ENCODE measurements at regions of chr1 and their contacts with region 1.

Region 1: GRCh38 chr1:208245185-208245705 is 1.1 kb upstream of the PLXNA2 start:
- DNase-seq: peak; percentile 87 to 94 (median 88)
- ATAC-seq: peak; percentile 87
- H3K4me3 ChIP-seq: peak overlapping the region; percentile 90 to 95
- H3K27ac ChIP-seq: peak overlapping the region; percentile 70 to 89
- H3K4me1 ChIP-seq: peaks cover 8 to 38% of the 10 kb centered on the region in 2 donors
- H3K27me3 ChIP-seq: peaks cover 0 to 33% of the 10 kb centered on the region in 2 donors
- CTCF ChIP-seq: peak; percentile 64 to 72

Region 2: DNA sequence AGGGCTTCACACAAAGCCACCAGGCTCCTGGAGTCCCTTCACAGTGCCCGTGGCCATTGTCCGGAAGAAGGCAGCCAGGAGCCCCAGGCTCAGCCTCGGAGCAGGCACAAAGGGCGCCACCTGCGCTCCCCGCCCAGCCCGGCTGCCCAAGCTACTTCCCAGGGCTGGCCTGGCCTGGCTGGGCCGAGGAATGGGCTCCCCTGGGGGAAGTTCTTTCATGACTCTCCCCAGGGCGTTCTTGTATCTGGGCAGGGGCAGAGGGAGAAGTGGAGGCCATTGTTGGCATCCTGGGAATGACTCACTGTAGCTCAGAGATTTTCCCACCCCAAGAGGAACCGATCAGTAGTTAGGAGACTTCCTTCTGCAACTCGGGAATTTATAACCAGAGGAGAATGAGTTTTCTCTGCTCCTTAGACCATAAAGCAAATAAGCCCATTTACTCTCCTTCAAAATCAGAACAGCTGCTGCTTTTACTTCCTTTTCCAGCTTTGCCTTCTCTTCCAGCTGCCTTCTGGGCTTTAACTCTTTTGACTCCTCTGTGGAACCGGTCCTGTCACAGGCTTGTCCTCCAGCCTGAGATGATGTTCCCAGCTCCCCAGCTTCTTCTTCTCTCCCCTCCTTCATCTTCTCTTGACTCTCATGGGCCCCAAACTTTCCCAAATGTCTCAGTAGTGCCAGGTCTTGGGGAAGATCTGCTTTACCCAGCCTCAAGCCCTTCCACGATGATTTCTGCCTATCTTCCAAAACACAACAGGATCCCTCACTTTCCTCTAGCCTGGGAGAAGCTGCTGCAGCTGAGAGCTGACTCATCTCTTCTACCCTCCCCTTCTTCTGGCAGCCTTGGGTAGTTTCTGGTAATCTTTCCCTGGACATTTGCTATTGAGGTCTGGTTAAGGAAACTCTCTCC is 215.6 kb before region 1 on chr1:
- intact Hi-C with region 1: loop called in 1 of 2 experiments (anchors 10 kb)
- DNase-seq: peak in 1 of 4 donors; percentile 67
- ATAC-seq: peak; percentile 62
- H3K4me3 ChIP-seq: no peak overlapping the region
- H3K27ac ChIP-seq: peak overlapping the region; percentile 50 to 81
- H3K4me1 ChIP-seq: peaks cover 5 to 8% of the 10 kb centered on the region in 2 donors
- H3K27me3 ChIP-seq: no peaks in the 10 kb centered on the region
- CTCF ChIP-seq: no peak

Region 3: DNA sequence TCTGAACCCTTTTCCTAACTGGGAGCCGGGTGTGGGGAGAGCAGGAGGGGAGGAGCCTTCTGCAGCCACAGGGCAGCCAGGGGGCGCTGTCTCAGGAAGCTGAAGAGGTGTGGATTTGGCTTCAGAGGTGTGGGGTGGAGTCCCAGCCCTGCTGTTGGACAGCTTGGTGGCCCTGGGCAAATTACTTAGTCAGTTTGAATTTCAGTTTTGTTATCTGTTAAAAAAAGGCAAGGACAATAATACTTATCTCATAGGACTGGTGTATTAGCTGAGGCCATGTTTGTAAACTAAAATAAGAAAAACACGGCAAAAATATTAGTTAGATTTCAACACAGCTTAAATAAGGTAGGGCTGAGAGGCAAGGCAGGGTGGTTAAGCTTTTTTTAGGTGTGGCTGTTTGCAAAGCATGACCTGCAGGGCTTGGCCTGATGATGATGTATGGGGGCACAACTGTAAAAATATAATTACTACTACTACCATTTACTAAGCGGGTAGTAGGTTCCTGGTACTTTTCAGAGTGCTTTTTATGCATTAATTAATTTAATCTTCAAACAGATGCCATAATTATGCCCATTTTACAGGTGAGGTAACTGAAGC is 112.9 kb before region 1 on chr1:
- intact Hi-C with region 1: loop called in 1 of 2 experiments (anchors 5 kb)
- DNase-seq: peak; percentile 45 to 92 (median 76)
- ATAC-seq: peak; percentile 98
- H3K4me3 ChIP-seq: no peak overlapping the region
- H3K27ac ChIP-seq: no peak overlapping the region
- H3K4me1 ChIP-seq: peaks cover 10 to 13% of the 10 kb centered on the region in 2 donors
- H3K27me3 ChIP-seq: no peaks in the 10 kb centered on the region
- CTCF ChIP-seq: peak; percentile 82 to 88